ENCODE measurements at regions of chr6 and their contacts with region 1.

Region 1: DNA sequence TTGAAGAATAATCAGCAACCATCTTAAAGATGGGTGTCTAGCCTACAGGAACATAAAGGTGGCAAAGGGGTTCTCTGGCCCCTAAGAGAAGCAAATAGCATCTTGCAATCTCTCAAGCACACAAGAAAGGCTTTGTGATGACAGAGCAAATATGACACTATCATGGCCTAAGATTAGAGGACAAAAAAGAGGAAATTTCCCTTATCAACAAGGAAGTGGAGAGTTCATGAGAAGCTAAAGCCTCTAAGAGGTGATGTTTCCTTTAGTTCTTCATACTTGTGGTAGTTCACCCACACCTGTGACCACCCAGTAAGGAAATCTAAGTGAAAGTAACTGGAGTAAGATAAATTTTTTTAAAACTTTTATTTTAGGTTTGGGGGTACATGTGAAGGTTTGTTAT is 88.4 kb downstream of the OLIG3 start:
- DNase-seq: no peak

Region 2: DNA sequence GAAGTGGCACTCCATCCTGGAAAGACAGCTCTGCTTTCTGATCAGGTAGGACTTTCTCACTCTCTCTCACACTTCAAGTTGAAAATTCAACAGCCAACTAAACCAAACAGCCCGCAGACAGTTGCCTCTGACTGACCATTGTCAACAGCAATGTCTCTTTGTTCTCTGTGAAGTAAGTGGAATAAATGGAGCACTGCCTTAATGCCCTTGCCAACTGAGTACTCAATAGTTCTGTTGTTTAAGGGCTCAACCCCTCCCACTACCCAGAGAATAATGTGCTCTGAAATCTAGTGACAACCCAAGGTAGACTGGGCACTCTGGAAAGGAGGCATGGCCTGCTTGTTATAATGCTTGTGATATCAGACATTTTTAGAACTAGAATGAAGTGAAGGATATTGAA is 1099.3 kb before region 1 on chr6:
- intact Hi-C with region 1: no loop called
- DNase-seq: no peak

Region 3: DNA sequence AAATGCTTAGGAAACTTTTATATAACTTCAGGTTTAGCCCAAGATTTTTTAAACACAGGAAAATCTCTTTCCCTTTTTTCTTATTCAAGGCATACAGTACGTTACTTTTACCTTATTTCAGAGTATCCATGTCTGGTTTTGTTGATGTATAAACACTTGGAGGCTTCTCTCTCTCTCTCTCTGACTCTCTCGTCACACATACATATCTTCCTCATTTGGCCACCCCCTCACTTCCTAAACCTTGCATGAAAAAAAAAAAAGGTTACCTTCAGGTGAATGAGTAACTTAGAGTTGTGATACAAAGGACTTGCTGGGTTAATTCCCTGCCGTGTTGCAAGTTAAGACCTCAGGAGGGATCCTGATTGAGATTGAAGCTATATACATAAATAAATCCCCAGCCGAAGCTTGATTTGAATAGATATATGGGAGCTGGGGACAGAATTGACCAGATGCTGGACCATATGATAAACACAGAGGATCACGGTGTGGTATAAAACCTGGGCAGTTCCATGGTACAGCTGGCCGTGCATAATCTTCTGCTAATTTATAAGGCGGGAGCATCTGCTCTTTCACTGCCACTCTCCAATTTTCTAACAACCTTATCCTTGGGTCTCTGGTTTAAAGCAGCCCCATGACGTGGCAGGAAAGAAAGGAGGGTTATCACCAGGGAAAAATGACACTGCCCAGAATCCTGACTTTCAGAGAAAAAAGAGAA is 306.0 kb before region 1 on chr6:
- intact Hi-C with region 1: loop called in 1 of 2 experiments (anchors 2 kb)
- DNase-seq: no peak

Region 4: GRCh38 chr6:137313928-137314855 is 91.6 kb before region 1 on chr6:
- intact Hi-C with region 1: no loop called
- DNase-seq: peak; percentile 89

Region 5: DNA sequence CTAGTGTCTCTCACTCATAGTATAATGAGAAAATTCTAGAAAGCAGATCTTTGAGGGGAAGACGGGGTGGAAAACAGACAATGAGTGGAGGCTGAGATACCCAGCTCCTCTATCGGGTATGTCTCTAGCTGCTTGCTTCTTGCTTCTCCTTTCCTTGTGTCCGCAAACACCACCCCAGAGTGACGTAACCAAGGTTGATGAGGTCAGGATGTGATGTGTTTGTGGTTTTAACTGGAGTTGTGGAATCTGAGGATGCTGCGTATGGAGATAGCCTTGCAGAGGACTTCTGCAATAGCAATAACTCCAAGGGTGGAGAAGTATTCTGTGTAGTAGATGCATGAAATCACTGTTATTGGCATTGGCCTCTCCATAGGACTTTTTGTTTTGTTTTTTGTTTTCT is 53.9 kb before region 1 on chr6:
- intact Hi-C with region 1: no loop called
- DNase-seq: peak; percentile 58

Region 6: DNA sequence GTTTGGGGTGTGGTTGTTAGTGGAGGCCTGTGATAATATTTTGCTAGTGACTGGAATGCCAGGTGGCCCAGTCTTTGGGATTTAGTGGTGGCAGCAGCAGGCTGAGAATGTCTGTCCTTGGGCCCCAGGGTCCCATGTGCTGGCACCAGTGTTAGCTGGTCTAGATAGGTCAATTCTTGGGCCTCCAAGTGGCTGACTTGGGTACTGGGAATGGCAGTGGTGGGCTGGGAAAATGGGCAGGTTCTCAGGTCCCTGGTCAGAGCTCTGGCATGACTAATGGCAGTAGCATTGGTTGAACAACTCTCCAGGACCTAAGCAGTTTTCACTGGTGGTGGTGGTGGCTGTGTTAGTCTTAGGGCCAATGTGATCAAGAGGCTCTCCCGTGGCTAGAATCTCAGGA is 38.1 kb after region 1 on chr6:
- intact Hi-C with region 1: loop called in 1 of 2 experiments (anchors 1 kb)
- DNase-seq: no peak

Region 7: GRCh38 chr6:137489046-137490005 is 83.5 kb after region 1 on chr6:
- intact Hi-C with region 1: no loop called
- DNase-seq: no peak

Measured in posterior vena cava (tissue), 2 donors.